CD8-positive, alpha-beta memory T cell (primary cell): ENCODE measurements at regions of chr1 and their contacts with region 1.

Region 1: GRCh38 chr1:154982897-154983648 is at the start of gene FLAD1:
- DNase-seq: peak; percentile 92 to 97 (median 96)
- H3K4me3 ChIP-seq: peak within 1 kb of the TSS; percentile 78
- H3K4me3 Mint-ChIP-seq: no peak within 1 kb of the TSS
- H3K27ac ChIP-seq: peak within 1 kb of the TSS; percentile 76
- H3K27ac Mint-ChIP-seq: peak within 1 kb of the TSS in 3 of 8 donors; percentile 61 to 95 (median 62)
- H3K4me1 ChIP-seq: peaks cover 15% of the 10 kb centered on the region
- H3K4me1 Mint-ChIP-seq: peaks cover 0 to 9% (median 2%) of the 10 kb centered on the region in 3 donors
- H3K27me3 ChIP-seq: no peaks in the 10 kb centered on the region
- H3K27me3 Mint-ChIP-seq: no peaks in the 10 kb centered on the region
- total RNA-seq, gene FLAD1: 73.7 to 76.3 TPM

Region 2: DNA sequence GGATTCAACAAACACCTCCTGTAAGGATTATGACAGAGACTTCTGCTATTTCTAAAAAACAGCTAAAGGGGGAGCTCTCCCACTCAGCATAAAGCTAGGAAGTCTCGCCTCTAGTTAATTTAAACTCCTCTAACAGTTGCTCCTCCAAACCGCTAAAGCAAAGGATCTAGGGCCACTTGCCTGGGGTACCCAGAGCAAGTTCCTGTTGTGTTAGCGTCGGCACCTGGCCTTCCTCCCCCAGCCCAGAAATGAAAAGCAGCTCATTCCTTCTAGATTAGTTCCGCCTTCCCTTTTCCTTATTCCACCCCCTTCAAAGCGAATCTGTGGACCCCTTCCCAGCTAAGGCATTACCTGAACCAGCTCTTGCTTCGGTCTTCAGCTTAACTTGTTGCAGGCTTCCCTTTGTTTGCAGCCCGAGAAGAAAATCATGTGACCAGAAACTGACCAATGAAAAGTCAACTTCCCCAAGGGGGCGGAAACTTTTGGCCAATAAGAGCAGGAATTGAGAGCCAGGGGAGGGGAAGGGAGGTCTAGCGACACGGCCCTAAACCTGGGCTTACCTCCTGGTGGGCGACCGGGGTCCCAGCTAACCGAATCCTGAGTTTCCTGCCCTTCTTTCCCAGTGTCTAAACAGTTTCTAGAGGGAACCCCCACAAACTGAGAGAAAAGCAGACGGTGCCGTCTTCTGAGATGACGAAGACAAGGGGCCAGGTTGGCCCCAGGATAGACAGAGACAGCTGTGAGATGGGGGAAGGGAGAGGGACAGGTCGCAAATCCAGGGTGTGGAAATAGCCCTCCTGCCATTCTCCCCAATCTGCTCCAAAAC is 27.1 kb before region 1 on chr1 and contains the start of gene PBXIP1:
- CTCF ChIA-PET with region 1: interaction called, 6 read pairs
- POLR2A ChIA-PET with region 1: interaction called, 12 read pairs
- DNase-seq: peak; percentile 67 to 94 (median 89)
- H3K4me3 ChIP-seq: peak within 1 kb of the TSS; percentile 85
- H3K4me3 Mint-ChIP-seq: peak within 1 kb of the TSS; percentile 95 to 99 (median 97)
- H3K27ac ChIP-seq: peak within 1 kb of the TSS; percentile 100
- H3K27ac Mint-ChIP-seq: peak within 1 kb of the TSS; percentile 99 to 100 (median 100)
- H3K4me1 ChIP-seq: peaks cover 66% of the 10 kb centered on the region
- H3K4me1 Mint-ChIP-seq: peaks cover 63 to 90% (median 77%) of the 10 kb centered on the region in 3 donors
- H3K27me3 ChIP-seq: no peaks in the 10 kb centered on the region
- H3K27me3 Mint-ChIP-seq: peaks cover 0 to 9% of the 10 kb centered on the region in 2 donors
- total RNA-seq, gene PBXIP1: 35.9 to 36.1 TPM

Region 3: DNA sequence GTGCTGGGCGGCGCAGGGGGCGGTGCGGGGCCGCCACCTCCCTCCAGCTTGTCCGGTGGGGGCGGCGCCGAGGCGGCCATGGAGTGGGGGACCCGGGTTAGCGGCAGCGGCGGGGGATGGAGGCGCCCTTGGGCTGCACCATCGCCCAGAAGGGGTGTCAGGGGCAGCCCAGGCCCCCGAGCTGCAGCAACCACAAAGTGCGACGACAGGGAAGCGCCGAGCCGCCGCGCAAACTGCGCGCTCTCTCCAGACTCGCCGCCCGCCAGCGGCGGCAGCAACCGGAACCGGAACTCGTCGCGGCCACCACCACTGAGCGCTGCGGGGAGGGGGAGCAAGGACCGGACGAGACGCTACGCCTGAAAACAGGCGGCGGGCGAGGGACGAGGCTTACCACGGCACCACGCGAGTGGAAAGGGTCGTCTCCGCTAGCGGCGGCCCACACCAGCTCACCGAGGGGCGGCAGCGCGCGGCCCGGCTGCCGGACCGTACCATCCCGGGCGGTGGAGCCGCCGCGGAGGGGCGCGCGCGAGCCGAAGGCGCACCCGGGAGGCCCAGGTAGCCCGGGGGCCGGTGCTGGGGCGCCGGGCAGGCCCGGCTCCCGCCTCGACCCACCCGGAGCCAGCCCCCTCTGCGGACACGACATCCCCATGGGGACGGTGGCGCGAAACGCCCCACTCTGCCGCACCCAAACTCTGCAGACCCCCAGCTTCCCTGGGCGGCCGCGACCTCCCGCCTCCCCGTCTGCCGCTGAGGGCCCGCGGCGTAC is 21.4 kb before region 1 on chr1 and contains the start of gene PYGO2:
- CTCF ChIA-PET with region 1: interaction called, 6 read pairs
- POLR2A ChIA-PET with region 1: interaction called, 10 read pairs
- DNase-seq: peak; percentile 74 to 86 (median 82)
- H3K4me3 ChIP-seq: peak within 1 kb of the TSS; percentile 64
- H3K4me3 Mint-ChIP-seq: peak within 1 kb of the TSS; percentile 92 to 98 (median 96)
- H3K27ac ChIP-seq: peak within 1 kb of the TSS; percentile 92
- H3K27ac Mint-ChIP-seq: peak within 1 kb of the TSS; percentile 94 to 99 (median 98)
- H3K4me1 ChIP-seq: peaks cover 28% of the 10 kb centered on the region
- H3K4me1 Mint-ChIP-seq: peaks cover 29 to 57% (median 47%) of the 10 kb centered on the region in 3 donors
- H3K27me3 ChIP-seq: no peaks in the 10 kb centered on the region
- H3K27me3 Mint-ChIP-seq: peaks cover 0 to 1% of the 10 kb centered on the region in 2 donors
- total RNA-seq, gene PYGO2: 34.2 to 35.3 TPM

Region 4: DNA sequence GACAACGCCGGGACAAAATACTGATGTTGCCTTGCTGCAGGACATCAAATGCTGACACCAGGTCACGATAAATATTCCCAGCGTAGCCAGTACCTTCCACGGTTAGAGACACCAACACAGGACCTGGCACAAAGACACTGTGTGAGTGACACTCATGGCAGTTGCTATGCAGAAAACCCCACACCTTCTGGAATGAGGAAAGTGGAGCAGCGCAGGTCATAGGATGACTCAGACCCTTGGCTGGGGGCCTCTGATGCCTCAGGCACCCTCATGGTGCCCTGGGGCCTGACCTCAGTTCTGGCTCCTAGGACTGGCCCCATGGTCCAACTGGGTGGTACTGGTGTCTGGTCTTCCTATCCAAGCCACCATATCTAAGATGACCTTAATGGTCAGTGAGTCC is 43.5 kb after region 1 on chr1:
- CTCF ChIA-PET with region 1: no interaction called
- POLR2A ChIA-PET with region 1: no interaction called
- DNase-seq: no peak
- H3K4me3 ChIP-seq: no peak overlapping the region
- H3K4me3 Mint-ChIP-seq: no peak overlapping the region
- H3K27ac ChIP-seq: no peak overlapping the region
- H3K27ac Mint-ChIP-seq: no peak overlapping the region
- H3K4me1 ChIP-seq: no peaks in the 10 kb centered on the region
- H3K4me1 Mint-ChIP-seq: peaks cover 0 to 2% (median 0%) of the 10 kb centered on the region in 3 donors
- H3K27me3 ChIP-seq: no peaks in the 10 kb centered on the region
- H3K27me3 Mint-ChIP-seq: peaks cover 6 to 7% of the 10 kb centered on the region in 2 donors

Region 5: DNA sequence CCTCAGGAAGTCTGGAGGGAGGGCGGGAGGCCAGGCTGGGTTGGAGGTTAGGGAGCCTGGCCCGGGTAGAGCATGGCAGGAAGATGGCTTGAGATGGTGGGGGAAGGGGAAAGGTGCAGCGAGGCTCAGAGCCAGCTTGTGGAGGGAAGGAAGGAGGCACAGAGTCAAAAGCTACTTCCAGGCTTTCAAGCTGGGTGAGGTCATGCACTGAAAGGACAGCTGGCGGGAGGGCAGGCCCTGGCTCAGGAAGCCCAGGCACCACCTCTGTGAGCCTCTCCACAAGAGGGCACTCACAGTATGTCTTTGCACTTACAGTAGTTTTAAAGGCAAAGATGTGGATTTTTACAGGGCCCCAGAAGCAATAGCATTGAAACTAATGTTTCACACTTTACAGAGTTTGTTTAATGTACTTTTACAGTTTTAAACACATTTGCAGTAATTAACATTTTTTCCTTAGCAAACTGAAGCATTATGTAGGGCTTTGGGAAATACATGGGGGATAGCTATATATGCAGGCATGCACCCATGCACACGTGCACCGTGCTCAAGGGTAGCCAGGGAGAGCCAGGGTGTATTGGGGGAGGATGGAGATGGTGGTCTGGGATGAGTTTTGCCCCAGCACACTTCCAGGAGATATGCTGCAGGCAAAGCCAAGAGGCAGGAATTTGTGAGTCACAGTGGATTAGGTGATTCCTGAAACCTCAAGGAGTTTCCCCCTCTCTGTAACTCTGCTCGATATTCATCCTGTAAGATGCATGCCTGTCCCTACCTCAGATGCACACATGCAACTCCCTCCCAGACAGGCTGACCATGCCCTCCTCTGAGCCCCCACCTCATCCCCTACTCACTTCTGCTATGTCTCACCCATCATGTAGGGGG is 62.0 kb after region 1 on chr1:
- CTCF ChIA-PET with region 1: interaction called, 12 read pairs
- POLR2A ChIA-PET with region 1: no interaction called
- DNase-seq: peak; percentile 34 to 75 (median 57)
- H3K4me3 ChIP-seq: no peak overlapping the region
- H3K4me3 Mint-ChIP-seq: peak overlapping the region in 1 of 7 donors; percentile 49
- H3K27ac ChIP-seq: no peak overlapping the region
- H3K27ac Mint-ChIP-seq: no peak overlapping the region
- H3K4me1 ChIP-seq: peaks cover under 1% of the 10 kb centered on the region
- H3K4me1 Mint-ChIP-seq: peaks cover 5 to 11% (median 6%) of the 10 kb centered on the region in 3 donors
- H3K27me3 ChIP-seq: no peaks in the 10 kb centered on the region
- H3K27me3 Mint-ChIP-seq: peaks cover 3 to 4% of the 10 kb centered on the region in 2 donors